PC-9 (cell line): ENCODE measurements at regions of chr2 and their contacts with region 1.

Region 1: GRCh38 chr2:185456517-185456916 is 282.1 kb upstream of the FSIP2 start:
- DNase-seq: no peak
- H3K4me3 ChIP-seq: no peak overlapping the region
- H3K27ac ChIP-seq: no peak overlapping the region
- H3K4me1 ChIP-seq: no peaks in the 10 kb centered on the region
- H3K27me3 ChIP-seq: no peaks in the 10 kb centered on the region
- CTCF ChIP-seq: no peak

Region 2: DNA sequence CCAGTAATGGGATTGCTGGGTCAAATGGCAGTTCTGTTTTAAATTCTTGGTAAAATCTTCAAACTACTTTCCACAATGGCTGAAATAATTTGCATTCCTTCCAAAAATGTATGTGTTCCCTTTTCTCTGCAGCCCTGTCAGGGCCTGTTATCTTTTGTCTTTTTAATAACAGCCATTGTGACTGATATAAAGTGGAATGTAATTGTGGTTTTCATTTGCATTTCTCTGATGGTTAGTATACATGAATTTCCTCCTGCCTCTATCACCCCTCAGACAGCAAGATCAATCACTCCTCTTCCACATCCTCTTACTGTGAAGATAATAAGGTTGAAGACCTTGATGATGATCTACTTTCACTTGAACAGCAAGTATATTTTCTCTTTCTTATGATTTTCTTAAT is 22.7 kb before region 1 on chr2:
- CTCF ChIA-PET with region 1: no interaction called
- POLR2A ChIA-PET with region 1: no interaction called
- intact Hi-C with region 1: loop called (anchors 1 kb)
- DNase-seq: no peak
- H3K4me3 ChIP-seq: no peak overlapping the region
- H3K27ac ChIP-seq: no peak overlapping the region
- H3K4me1 ChIP-seq: no peaks in the 10 kb centered on the region
- H3K27me3 ChIP-seq: no peaks in the 10 kb centered on the region
- CTCF ChIP-seq: no peak